Activated CD4-positive, alpha-beta memory T cell treated with anti-CD3 and anti-CD28 coated beads for 36 hours (primary cell): ENCODE measurements at regions of chr6 and their contacts with region 1.

Region 1: GRCh38 chr6:89371849-89372505 is 19.5 kb upstream of the UBE2J1 start:
- DNase-seq: peak; percentile 85
- H3K4me3 Mint-ChIP-seq: no peak overlapping the region
- H3K27ac Mint-ChIP-seq: no peak overlapping the region
- H3K4me1 Mint-ChIP-seq: peaks cover 16% of the 10 kb centered on the region
- H3K27me3 Mint-ChIP-seq: no peaks in the 10 kb centered on the region

Region 2: GRCh38 chr6:88823998-88824397 is 548.0 kb before region 1 on chr6:
- CTCF ChIA-PET with region 1: no interaction called
- POLR2A ChIA-PET with region 1: no interaction called
- intact Hi-C with region 1: no loop called
- DNase-seq: no peak
- H3K4me3 Mint-ChIP-seq: no peak overlapping the region
- H3K27ac Mint-ChIP-seq: no peak overlapping the region
- H3K4me1 Mint-ChIP-seq: peaks cover 6% of the 10 kb centered on the region
- H3K27me3 Mint-ChIP-seq: no peaks in the 10 kb centered on the region

Region 3: GRCh38 chr6:89281779-89282246 is 90.2 kb before region 1 on chr6:
- CTCF ChIA-PET with region 1: interaction called, 17 read pairs
- POLR2A ChIA-PET with region 1: no interaction called
- intact Hi-C with region 1: no loop called
- DNase-seq: peak; percentile 77
- H3K4me3 Mint-ChIP-seq: no peak overlapping the region
- H3K27ac Mint-ChIP-seq: no peak overlapping the region
- H3K4me1 Mint-ChIP-seq: no peaks in the 10 kb centered on the region
- H3K27me3 Mint-ChIP-seq: no peaks in the 10 kb centered on the region

Region 4: DNA sequence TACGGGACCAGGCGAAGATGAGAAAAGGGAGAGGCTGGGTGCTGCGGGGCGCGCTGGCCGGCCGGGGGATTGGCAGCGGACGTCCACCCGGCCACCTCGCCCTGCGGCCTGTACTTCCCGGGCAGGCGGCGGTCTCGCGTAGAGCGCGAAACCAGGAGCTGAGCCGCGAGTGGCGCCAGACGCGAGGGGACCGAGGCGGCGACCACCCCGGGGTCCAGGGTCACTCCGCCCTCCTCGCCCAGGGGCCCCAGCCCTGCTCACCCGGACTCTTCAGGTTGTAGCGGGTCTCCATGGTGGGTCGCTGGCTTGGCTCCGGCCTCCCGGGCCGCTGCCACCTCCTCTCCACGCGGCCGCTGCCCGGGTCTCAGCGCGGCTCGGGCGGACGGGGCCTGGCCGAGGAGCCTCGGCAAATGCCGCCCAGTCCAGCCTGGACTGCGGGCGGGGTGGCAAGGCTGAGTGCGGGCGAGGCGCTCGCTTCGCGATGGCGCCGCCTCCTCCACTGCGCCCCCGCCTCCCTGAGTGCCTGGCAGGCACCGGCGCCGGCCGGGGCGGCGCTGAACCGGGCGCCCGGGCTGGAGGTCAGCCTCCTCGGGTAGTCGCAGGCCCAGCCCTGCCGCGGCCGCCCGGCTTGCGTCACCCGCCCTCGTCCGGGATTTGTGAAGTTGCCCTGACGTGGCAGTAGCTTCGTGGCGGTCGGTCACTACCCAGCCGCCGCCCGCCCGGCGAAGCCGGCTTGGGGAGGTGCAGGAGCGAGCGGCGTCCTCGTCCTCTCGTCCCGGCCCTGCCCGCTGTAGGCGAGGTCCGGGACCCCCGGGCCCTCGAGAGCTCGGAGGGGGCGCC is 19.5 kb before region 1 on chr6 and contains the start of gene UBE2J1:
- CTCF ChIA-PET with region 1: interaction called, 47 read pairs
- POLR2A ChIA-PET with region 1: interaction called, 3 read pairs
- intact Hi-C with region 1: no loop called
- DNase-seq: peak; percentile 85
- H3K4me3 Mint-ChIP-seq: peak within 1 kb of the TSS; percentile 91
- H3K27ac Mint-ChIP-seq: peak within 1 kb of the TSS; percentile 84
- H3K4me1 Mint-ChIP-seq: peaks cover 75% of the 10 kb centered on the region
- H3K27me3 Mint-ChIP-seq: no peaks in the 10 kb centered on the region
- total RNA-seq, gene UBE2J1: 23.8 to 24.9 TPM

Region 5: DNA sequence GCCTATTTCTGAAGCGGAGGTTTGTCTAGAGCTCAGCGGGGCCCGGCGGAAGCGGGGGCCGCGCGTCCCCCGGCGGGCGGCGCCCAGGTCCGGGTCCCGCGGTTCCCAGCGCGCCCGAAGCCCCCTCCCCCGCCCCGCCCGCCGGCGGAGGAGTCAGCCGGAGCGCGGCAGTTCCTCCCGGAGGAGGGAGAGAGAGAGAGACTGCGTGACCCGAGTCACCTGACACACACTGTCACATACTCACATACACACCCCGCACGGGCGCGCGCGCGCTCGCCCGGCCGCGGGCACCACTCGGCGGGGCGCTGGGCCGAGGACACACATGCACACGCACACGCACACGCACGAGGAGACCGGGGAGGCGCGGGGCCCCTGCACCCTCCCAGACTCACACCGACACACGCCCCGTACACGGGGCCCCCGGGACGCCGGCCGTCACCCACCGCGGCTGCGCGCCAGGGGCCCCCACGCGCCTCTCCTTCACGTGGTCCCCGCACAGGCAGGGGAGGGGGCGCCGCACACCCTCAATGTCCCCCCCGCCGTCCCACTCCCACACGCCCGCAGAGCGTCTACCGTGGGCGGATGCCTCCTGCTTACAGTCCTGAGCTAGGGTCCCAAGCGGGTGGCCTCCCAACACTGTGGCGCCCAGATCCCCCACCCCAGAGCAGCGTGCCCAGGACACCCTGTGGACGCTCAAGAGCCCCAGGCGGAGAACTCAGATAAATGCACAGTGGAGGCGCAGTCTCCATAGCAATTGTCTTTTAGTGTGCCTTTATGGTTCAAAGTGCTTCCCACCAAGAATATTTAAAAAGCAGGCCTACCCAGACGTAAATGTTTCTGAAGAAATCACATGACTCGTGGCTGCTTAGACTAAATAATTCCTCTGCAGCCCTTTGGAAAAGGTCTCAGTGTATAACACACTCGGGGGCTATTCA is 40.4 kb after region 1 on chr6 and contains the start of gene RRAGD:
- CTCF ChIA-PET with region 1: interaction called, 22 read pairs
- POLR2A ChIA-PET with region 1: interaction called, 3 read pairs
- intact Hi-C with region 1: loop called (anchors 1 kb)
- DNase-seq: peak; percentile 72
- H3K4me3 Mint-ChIP-seq: peak within 1 kb of the TSS; percentile 83
- H3K27ac Mint-ChIP-seq: peak within 1 kb of the TSS; percentile 38
- H3K4me1 Mint-ChIP-seq: peaks cover 18% of the 10 kb centered on the region
- H3K27me3 Mint-ChIP-seq: peaks cover 2% of the 10 kb centered on the region
- total RNA-seq, gene RRAGD: 15.8 to 16.4 TPM

Region 6: DNA sequence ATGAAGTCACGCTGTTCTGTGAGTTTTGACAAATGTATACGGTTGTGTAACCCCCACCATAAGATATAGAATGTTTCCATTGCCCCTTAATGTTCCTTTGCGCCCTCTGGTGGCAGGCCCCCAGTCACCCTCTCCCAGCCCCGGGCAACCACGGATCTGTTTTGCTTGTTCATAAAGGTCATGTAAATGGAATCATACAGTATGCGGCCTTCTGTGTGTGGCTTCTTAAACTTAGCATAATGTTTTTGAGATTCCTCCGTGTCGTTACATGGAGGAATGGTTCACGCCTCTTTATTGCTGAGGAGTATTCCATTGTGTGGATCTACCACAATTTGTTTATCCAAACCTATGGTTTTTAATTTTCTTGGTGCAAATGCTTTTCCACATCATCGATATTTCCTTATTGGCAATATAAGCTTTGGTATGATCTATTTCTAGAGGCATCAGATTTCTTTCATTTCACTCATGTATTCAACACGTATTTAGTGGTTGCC is 238.2 kb after region 1 on chr6:
- CTCF ChIA-PET with region 1: interaction called, 27 read pairs
- POLR2A ChIA-PET with region 1: no interaction called
- intact Hi-C with region 1: loop called (anchors 1 kb)
- DNase-seq: peak; percentile 83
- H3K4me3 Mint-ChIP-seq: no peak overlapping the region
- H3K27ac Mint-ChIP-seq: no peak overlapping the region
- H3K4me1 Mint-ChIP-seq: no peaks in the 10 kb centered on the region
- H3K27me3 Mint-ChIP-seq: no peaks in the 10 kb centered on the region